ENCODE measurements at regions of chr2 and their contacts with region 1.

Region 1: GRCh38 chr2:178700922-178701342 is 106.3 kb downstream of the TTN start:
- DNase-seq: peak; percentile 4
- ATAC-seq: no peak
- H3K4me3 Mint-ChIP-seq: no peak overlapping the region
- H3K27ac Mint-ChIP-seq: no peak overlapping the region
- H3K4me1 Mint-ChIP-seq: no peaks in the 10 kb centered on the region
- H3K27me3 Mint-ChIP-seq: no peaks in the 10 kb centered on the region

Region 2: GRCh38 chr2:178689808-178690207 is 11.1 kb before region 1 on chr2:
- CTCF ChIA-PET with region 1: interaction called, 13 read pairs
- POLR2A ChIA-PET with region 1: no interaction called
- intact Hi-C with region 1: no loop called
- DNase-seq: no peak
- ATAC-seq: no peak
- H3K4me3 Mint-ChIP-seq: no peak overlapping the region
- H3K27ac Mint-ChIP-seq: no peak overlapping the region
- H3K4me1 Mint-ChIP-seq: no peaks in the 10 kb centered on the region
- H3K27me3 Mint-ChIP-seq: no peaks in the 10 kb centered on the region

Region 3: DNA sequence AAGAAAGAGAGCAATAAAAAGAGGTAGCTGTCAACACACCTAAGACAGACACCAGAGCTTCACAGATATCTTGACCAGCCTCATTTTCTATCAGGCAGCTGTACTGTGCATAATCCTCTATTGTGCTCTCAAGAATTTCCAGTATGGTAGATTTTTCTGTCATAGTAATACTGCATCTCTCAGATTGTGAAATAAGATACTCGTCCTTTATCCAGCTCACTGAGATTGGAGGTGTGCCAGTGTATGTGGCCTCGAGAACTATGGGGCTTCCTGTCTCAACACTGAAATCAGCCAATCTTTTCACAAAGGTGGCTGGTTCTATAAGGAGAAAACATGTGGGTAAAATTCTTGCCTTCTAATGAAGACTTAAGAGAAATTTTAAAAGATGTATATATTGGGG is 17.4 kb after region 1 on chr2:
- CTCF ChIA-PET with region 1: interaction called, 14 read pairs
- POLR2A ChIA-PET with region 1: no interaction called
- intact Hi-C with region 1: no loop called
- DNase-seq: no peak
- ATAC-seq: no peak
- H3K4me3 Mint-ChIP-seq: no peak overlapping the region
- H3K27ac Mint-ChIP-seq: no peak overlapping the region
- H3K4me1 Mint-ChIP-seq: no peaks in the 10 kb centered on the region
- H3K27me3 Mint-ChIP-seq: no peaks in the 10 kb centered on the region

Region 4: DNA sequence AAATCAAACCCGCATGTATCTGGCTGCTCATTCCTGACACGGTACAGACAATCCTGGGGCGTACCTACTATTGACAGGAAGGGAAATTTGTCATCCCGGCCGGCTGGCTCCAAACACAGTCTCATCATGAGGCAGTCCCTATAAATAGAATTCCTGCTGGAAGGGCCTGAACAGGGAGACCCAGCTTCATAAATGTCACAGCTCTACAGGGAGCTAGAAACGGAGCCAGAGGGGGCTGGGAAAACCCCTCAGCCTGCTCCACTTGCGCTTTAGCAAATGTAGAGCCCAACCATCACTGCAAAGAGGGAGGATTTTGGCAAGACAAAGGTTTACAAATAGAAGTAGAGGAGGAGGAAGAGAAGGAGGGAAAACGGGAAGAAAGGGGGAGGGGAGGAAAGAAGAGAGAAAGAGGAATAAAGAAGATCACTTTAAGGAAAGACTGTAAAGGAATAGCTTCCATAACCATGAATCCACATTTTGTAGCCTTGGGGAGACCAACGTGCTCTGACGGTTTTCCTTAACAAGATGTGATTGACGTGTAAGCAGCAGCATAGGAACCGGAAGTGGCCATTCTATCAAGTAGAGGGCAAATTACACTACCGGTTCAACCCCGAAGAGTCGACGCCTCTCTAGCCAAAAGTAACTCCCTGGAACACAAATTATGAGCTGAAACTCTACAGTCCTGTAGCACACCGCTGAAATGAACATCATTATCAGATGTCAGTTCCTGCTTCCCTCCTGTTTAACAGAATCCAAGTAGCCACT is 163.1 kb after region 1 on chr2:
- CTCF ChIA-PET with region 1: no interaction called
- POLR2A ChIA-PET with region 1: no interaction called
- intact Hi-C with region 1: no loop called
- DNase-seq: no peak
- ATAC-seq: no peak
- H3K4me3 Mint-ChIP-seq: no peak overlapping the region
- H3K27ac Mint-ChIP-seq: no peak overlapping the region
- H3K4me1 Mint-ChIP-seq: no peaks in the 10 kb centered on the region
- H3K27me3 Mint-ChIP-seq: no peaks in the 10 kb centered on the region